Lower lobe of right lung (tissue), 2 donors: ENCODE measurements at regions of chr1 and their contacts with region 1.

Region 1: GRCh38 chr1:116485071-116485735 is 85.6 kb downstream of the CD58 start:
- DNase-seq: peak; percentile 91
- ATAC-seq: peak; percentile 89 to 91
- H3K4me3 ChIP-seq: no peak overlapping the region
- H3K27ac ChIP-seq: no peak overlapping the region
- H3K4me1 ChIP-seq: peaks cover 11% of the 10 kb centered on the region
- H3K27me3 ChIP-seq: no peaks in the 10 kb centered on the region
- CTCF ChIP-seq: peak; percentile 93

Region 2: DNA sequence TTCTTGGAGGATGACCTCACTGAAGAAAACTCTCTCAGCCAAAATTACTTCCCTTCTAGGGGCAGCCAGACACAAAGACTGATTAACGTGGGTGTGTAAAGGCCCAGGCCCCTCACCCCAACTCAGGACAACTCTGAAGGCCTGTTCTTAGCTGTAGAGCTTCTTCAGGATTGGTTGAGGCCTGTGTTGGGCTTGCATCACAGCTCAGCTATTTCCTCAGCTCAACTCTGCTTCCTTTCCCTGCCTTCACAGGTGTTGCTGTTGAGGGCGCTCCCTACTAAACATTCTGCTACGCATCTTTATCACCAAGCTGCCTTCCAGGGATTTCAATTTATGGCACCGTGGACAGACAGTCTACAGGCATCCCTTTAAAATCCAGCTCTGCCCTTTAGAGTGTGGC is 337.2 kb before region 1 on chr1:
- intact Hi-C with region 1: loop called (anchors 10 kb)
- DNase-seq: no peak
- ATAC-seq: no peak
- H3K4me3 ChIP-seq: no peak overlapping the region
- H3K27ac ChIP-seq: no peak overlapping the region
- H3K4me1 ChIP-seq: peaks cover 16% of the 10 kb centered on the region
- H3K27me3 ChIP-seq: no peaks in the 10 kb centered on the region
- CTCF ChIP-seq: no peak